Activated B cell treated with CpG ODN at 0.5 μM for 24 hours (primary cell): ENCODE measurements at regions of chr4 and their contacts with region 1.

Region 1: DNA sequence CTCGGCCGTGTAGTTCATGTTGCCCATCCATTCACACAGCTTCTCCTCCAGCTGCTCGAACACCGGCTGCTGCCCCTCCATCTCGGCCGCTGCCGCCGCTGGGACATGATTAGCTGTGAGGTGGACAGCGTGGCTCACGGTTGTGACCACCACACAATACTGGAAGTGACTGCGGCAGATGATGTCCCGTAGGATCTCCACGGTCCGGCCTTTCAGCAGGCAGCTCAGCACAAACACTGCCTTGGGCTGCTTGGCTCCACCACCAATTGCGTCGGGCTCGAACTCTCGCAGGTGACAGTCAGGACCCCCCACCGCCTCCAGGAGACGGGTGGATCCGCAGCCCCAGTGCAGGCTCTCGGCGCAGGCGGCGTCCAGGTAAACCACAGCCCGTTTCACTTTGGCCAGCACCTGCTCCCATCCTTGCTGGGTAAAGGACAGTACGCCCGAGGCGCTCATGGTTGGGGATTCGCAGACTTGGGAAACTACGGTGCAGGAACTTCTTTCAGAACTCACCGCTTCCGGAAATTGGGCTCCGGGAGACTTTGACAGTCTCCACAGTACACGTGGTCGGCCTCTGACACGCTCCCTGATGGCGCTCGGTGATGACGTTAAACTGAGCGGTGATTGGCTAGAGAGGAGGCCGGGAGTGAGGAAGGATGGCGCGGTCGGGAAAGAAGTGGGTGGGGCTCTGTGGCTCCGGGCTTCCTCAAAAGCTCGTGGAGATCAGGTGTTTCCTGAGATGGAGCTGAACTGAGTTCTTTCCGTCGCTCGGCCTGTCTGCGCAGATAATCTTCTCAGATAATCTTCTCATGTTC is at the start of gene SCFD2:
- DNase-seq: peak; percentile 94
- ATAC-seq: peak; percentile 98
- H3K4me3 Mint-ChIP-seq: peak within 1 kb of the TSS; percentile 95
- H3K27ac Mint-ChIP-seq: peak within 1 kb of the TSS; percentile 93
- H3K4me1 Mint-ChIP-seq: peaks cover 49% of the 10 kb centered on the region
- H3K27me3 Mint-ChIP-seq: peaks cover 12% of the 10 kb centered on the region
- CTCF ChIP-seq: no peak
- total RNA-seq, gene SCFD2: 36.1 and 46.6 TPM in 2 replicates

Region 2: GRCh38 chr4:52721968-52722815 is 643.5 kb before region 1 on chr4:
- CTCF ChIA-PET with region 1: no interaction called
- POLR2A ChIA-PET with region 1: no interaction called
- intact Hi-C with region 1: loop called (anchors 1 kb)
- DNase-seq: peak; percentile 75
- ATAC-seq: peak; percentile 91
- H3K4me3 Mint-ChIP-seq: peak overlapping the region; percentile 84
- H3K27ac Mint-ChIP-seq: peak overlapping the region; percentile 85
- H3K4me1 Mint-ChIP-seq: peaks cover 15% of the 10 kb centered on the region
- H3K27me3 Mint-ChIP-seq: no peaks in the 10 kb centered on the region
- CTCF ChIP-seq: no peak

Region 3: GRCh38 chr4:53377319-53378170 is 11.9 kb after region 1 on chr4 and contains the start of gene FIP1L1:
- CTCF ChIA-PET with region 1: no interaction called
- POLR2A ChIA-PET with region 1: interaction called, 19 read pairs
- intact Hi-C with region 1: loop called (anchors 1 kb)
- DNase-seq: peak; percentile 97
- ATAC-seq: peak; percentile 91
- H3K4me3 Mint-ChIP-seq: peak within 1 kb of the TSS; percentile 99
- H3K27ac Mint-ChIP-seq: peak within 1 kb of the TSS; percentile 98
- H3K4me1 Mint-ChIP-seq: peaks cover 34% of the 10 kb centered on the region
- H3K27me3 Mint-ChIP-seq: no peaks in the 10 kb centered on the region
- CTCF ChIP-seq: no peak
- total RNA-seq, gene FIP1L1: 72.7 and 80.1 TPM in 2 replicates

Region 4: DNA sequence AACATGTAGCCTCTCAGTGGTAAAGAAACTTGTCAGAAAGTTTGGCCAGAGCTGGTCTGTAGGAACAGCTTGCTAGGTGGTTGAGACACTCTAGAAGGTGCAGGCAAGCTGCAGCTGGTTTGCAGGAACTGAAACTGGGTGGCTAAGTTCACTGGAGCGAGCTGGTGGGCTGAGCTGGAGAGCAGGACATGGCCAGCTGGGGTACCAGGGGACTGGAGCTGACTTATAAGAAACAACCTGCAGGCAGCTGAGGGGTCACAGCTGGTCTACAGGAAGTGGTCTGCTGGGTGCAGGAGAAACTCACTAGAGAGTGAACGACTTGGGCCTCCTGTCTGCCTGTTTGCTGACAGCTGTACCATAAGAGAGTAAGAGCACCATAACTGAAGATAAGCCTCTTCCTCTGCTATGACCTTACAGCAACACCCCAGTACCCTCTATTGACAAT is 382.7 kb after region 1 on chr4:
- CTCF ChIA-PET with region 1: no interaction called
- POLR2A ChIA-PET with region 1: no interaction called
- intact Hi-C with region 1: loop called (anchors 5 kb)
- DNase-seq: peak; percentile 46
- ATAC-seq: peak; percentile 94
- H3K4me3 Mint-ChIP-seq: peak overlapping the region; percentile 7
- H3K27ac Mint-ChIP-seq: peak overlapping the region; percentile 84
- H3K4me1 Mint-ChIP-seq: peaks cover 63% of the 10 kb centered on the region
- H3K27me3 Mint-ChIP-seq: no peaks in the 10 kb centered on the region
- CTCF ChIP-seq: no peak

Region 5: DNA sequence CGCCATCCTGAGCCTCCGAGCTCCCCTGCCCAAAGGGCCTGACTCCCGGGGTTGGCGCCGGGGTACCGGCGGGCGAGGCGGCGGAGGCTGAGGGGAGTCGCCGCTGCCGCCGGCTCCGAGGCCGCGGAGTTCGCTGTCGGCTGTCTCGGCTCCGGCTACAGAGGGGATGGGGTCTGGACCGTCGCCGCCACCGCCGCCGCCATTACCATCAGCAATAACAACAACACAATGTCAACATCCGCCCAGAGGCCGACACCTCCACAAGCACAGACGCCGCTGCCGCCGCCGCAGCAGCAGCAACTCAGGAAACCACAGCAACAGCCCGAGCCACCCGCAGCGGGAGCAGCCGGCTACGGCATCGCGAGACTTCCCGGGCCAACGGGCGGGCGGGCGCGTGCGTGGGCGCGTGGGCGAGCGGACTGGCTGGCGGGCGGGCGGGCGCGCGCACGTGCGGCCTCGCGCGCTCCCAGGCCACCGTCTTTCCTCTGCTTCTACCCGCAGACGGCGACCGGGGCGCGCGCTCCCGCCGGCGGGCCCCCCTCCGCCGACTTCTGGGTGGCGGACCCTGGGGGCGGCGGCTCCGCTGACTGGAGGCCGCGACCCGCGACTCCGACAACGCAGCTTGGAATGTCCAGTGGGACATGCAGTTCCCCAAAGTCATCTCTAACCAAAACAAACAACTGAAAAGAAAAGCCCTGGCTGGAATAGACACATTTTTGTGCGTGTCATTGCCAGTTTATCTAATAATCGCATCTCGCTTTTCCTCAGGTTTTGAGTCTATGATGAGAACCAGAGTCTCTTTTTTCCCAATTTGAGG is 698.8 kb after region 1 on chr4 and contains the start of gene CHIC2:
- CTCF ChIA-PET with region 1: no interaction called
- POLR2A ChIA-PET with region 1: no interaction called
- intact Hi-C with region 1: loop called (anchors 2 kb)
- DNase-seq: peak; percentile 95
- ATAC-seq: peak; percentile 90
- H3K4me3 Mint-ChIP-seq: peak within 1 kb of the TSS; percentile 92
- H3K27ac Mint-ChIP-seq: peak within 1 kb of the TSS; percentile 87
- H3K4me1 Mint-ChIP-seq: peaks cover 47% of the 10 kb centered on the region
- H3K27me3 Mint-ChIP-seq: peaks cover 3% of the 10 kb centered on the region
- CTCF ChIP-seq: no peak
- total RNA-seq, gene CHIC2: 17.5 and 21.6 TPM in 2 replicates